PC-3 (cell line): ENCODE measurements at regions of chr2 and their contacts with region 1.

Region 1: GRCh38 chr2:181891258-181891965 is at the start of gene ITPRID2:
- DNase-seq: peak; percentile 92
- ATAC-seq: peak; percentile 84
- H3K4me3 ChIP-seq: peak within 1 kb of the TSS; percentile 84
- H3K27ac ChIP-seq: peak within 1 kb of the TSS; percentile 85
- H3K4me1 ChIP-seq: peaks cover 62% of the 10 kb centered on the region
- H3K27me3 ChIP-seq: no peaks in the 10 kb centered on the region
- CTCF ChIP-seq: no peak
- total RNA-seq, gene ITPRID2: 113 and 145 TPM in 2 replicates

Region 2: GRCh38 chr2:181770145-181770544 is 121.3 kb before region 1 on chr2:
- CTCF ChIA-PET with region 1: no interaction called
- POLR2A ChIA-PET with region 1: interaction called, 5 read pairs
- intact Hi-C with region 1: loop called (anchors 2 kb)
- DNase-seq: peak; percentile 92
- ATAC-seq: peak; percentile 88
- H3K4me3 ChIP-seq: no peak overlapping the region
- H3K27ac ChIP-seq: peak overlapping the region; percentile 26; the same call in 1 of the 2 replicates
- H3K4me1 ChIP-seq: peaks cover 30% of the 10 kb centered on the region
- H3K27me3 ChIP-seq: no peaks in the 10 kb centered on the region
- CTCF ChIP-seq: no peak

Region 3: DNA sequence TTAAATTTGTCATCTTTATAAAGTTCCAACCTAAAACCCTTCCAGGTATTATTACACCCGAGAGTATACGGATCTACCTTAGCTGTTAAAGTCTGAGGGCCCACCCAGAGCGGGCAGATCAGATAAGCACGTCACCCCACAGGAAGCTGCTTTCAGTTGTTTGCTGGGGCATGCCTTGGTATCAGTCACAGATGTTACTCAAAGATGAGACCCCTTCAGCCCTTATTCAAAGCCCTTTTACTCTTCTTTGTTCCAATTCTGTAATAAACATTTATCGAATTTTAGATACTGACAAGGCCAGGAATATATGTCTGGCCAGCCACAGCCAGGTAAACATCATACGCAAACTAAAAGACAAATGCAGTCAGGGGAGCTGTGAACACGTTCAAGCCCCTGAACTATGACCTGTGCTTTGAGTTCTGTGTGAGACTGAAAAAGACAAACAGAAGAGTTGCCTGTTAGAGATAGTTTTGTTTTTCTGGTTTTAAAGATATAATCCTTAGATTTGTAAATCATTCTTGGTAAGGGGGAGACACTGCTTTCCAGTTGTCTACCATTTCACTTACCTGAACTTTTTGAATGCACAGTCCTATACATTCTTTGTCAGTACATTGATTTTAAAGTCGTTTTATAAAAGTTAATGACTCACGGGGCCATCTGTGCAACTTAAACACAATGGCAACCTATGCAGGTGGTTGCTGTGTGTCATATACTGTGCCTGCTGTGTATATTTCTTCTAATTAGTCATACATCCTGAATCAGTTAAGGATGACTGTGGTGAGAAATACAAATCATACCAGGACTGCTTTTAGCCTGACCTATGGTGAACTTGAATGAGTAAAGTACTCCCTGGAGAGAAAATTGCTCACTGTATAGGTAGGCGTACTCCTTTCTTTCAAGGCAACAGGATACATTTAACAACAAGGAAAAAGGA is 100.4 kb before region 1 on chr2:
- CTCF ChIA-PET with region 1: no interaction called
- POLR2A ChIA-PET with region 1: no interaction called
- intact Hi-C with region 1: loop called (anchors 5 kb)
- DNase-seq: peak; percentile 95
- ATAC-seq: peak; percentile 96
- H3K4me3 ChIP-seq: 0 out of 2 replicates have a peak overlapping the region, but pooled peaks have one; percentile 2
- H3K27ac ChIP-seq: peak overlapping the region; percentile 96
- H3K4me1 ChIP-seq: peaks cover 57% of the 10 kb centered on the region
- H3K27me3 ChIP-seq: no peaks in the 10 kb centered on the region
- CTCF ChIP-seq: no peak

Region 4: GRCh38 chr2:181810823-181811695 is 80.4 kb before region 1 on chr2:
- CTCF ChIA-PET with region 1: no interaction called
- POLR2A ChIA-PET with region 1: no interaction called
- intact Hi-C with region 1: loop called (anchors 1 kb)
- DNase-seq: peak; percentile 97
- ATAC-seq: peak; percentile 95
- H3K4me3 ChIP-seq: 0 out of 2 replicates have a peak overlapping the region, but pooled peaks have one; percentile 26
- H3K27ac ChIP-seq: peak overlapping the region; percentile 94
- H3K4me1 ChIP-seq: peaks cover 38% of the 10 kb centered on the region
- H3K27me3 ChIP-seq: no peaks in the 10 kb centered on the region
- CTCF ChIP-seq: no peak